Dendritic cell treated with granulocyte-macrophage colony-stimulating factor and Interleukin-4, amounts not matched to agents 40 ng/mL and 50 ng/mL, for 4 days (primary cell): ENCODE measurements at regions of chr2 and their contacts with region 1.

Region 1: DNA sequence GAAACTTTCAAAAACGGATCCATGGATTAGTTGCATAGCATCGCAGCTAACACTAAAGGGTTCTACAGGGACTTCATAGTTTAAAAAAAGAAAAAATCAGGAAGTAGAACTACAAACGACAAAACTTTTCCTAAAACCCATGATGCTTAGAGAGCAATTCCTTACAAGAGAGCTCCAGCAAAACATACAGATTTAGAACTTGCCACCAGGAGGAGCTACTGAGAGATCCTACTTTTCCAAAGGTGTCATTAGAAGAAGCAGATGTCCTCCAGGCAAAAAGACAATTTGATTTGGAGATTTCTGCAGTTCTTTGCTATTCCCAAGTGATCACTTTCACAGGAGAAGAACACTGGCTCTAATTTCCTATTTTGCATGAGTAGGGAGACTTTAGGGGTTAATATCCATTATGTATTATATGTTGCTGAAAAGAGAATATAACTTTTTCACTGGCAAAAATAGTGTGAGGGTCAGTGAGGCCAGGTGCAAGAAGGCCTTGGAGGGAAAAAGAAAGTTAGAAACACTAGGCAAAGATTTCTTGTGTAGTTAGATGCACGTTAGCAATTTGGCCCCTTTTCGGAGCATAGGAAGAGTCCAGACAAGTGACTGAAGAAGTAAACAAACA is 436.2 kb downstream of the SUCLG1 start:
- H3K4me3 Mint-ChIP-seq: no peak overlapping the region
- H3K27ac Mint-ChIP-seq: no peak overlapping the region
- H3K4me1 Mint-ChIP-seq: no peaks in the 10 kb centered on the region
- H3K27me3 Mint-ChIP-seq: no peaks in the 10 kb centered on the region

Region 2: GRCh38 chr2:84247542-84247951 is 224.6 kb after region 1 on chr2:
- intact Hi-C with region 1: no loop called
- H3K4me3 Mint-ChIP-seq: no peak overlapping the region
- H3K27ac Mint-ChIP-seq: no peak overlapping the region
- H3K4me1 Mint-ChIP-seq: no peaks in the 10 kb centered on the region
- H3K27me3 Mint-ChIP-seq: no peaks in the 10 kb centered on the region

Region 3: GRCh38 chr2:84314901-84315330 is 292.0 kb after region 1 on chr2:
- intact Hi-C with region 1: loop called (anchors 1 kb)
- H3K4me3 Mint-ChIP-seq: no peak overlapping the region
- H3K27ac Mint-ChIP-seq: no peak overlapping the region
- H3K4me1 Mint-ChIP-seq: peaks cover 5% of the 10 kb centered on the region
- H3K27me3 Mint-ChIP-seq: no peaks in the 10 kb centered on the region